Caco-2 (cell line): ENCODE measurements at regions of chr11 and their contacts with region 1.

Region 1: GRCh38 chr11:65418711-65419459 is 3.7 kb upstream of the NEAT1 start:
- DNase-seq: peak; percentile 96 to 98
- H3K4me3 ChIP-seq: peak overlapping the region; percentile 9
- H3K4me3 Mint-ChIP-seq: peak overlapping the region; percentile 73
- H3K27ac Mint-ChIP-seq: peak overlapping the region; percentile 95
- H3K4me1 ChIP-seq: peaks cover 55% of the 10 kb centered on the region
- H3K4me1 Mint-ChIP-seq: peaks cover 47% of the 10 kb centered on the region
- H3K27me3 ChIP-seq: no peaks in the 10 kb centered on the region
- H3K27me3 Mint-ChIP-seq: peaks cover 5% of the 10 kb centered on the region
- CTCF ChIP-seq: no peak

Region 2: GRCh38 chr11:65382033-65382807 is 36.7 kb before region 1 on chr11 and contains the start of gene SLC25A45:
- CTCF ChIA-PET with region 1: interaction called, 6 read pairs
- POLR2A ChIA-PET with region 1: interaction called, 7 read pairs
- intact Hi-C with region 1: loop called (anchors 1 kb)
- DNase-seq: peak; percentile 93 to 94
- H3K4me3 ChIP-seq: peak within 1 kb of the TSS; percentile 39
- H3K4me3 Mint-ChIP-seq: peak within 1 kb of the TSS; percentile 69
- H3K27ac Mint-ChIP-seq: peak within 1 kb of the TSS; percentile 90
- H3K4me1 ChIP-seq: peaks cover 56% of the 10 kb centered on the region
- H3K4me1 Mint-ChIP-seq: peaks cover 28% of the 10 kb centered on the region
- H3K27me3 ChIP-seq: no peaks in the 10 kb centered on the region
- H3K27me3 Mint-ChIP-seq: no peaks in the 10 kb centered on the region
- CTCF ChIP-seq: peak; percentile 76 to 94
- total RNA-seq, gene SLC25A45: 8.1 and 8.5 TPM in 2 replicates

Region 3: DNA sequence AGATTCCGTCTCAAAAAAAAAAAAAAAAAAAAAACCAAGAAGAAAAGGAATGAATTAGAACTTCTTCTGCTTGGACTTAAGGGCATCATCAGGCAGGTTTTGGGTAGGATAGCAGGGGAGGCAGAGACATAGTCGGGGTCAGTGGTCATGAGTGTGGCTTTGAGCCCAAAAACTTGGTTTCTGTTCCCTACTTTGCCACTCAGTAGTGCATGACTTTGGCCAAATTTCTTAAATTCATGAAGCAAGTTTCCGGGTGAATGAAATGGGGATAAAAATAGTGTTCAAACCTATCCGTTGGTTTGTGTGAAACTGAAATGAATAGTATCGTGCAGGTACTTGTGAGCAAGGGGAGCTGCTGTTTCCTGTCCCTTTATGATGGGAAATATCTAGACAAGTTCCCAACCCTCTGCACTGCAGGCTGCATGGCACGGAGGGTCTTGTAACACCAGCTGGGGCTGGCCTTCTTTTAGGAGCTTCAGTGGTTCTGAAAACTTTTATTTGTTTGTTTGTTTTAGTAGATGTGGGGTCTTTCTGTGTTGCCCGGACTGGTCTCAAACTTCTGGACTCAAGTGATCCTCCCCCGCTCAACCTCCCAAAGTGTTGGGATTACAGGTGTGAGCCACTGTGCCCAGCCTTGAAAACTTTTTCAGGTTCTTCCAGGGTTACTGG is 22.1 kb after region 1 on chr11:
- CTCF ChIA-PET with region 1: interaction called, 4 read pairs
- POLR2A ChIA-PET with region 1: interaction called, 5 read pairs
- intact Hi-C with region 1: loop called (anchors 1 kb)
- DNase-seq: no peak
- H3K4me3 ChIP-seq: no peak overlapping the region
- H3K4me3 Mint-ChIP-seq: peak overlapping the region; percentile 20
- H3K27ac Mint-ChIP-seq: peak overlapping the region; percentile 91
- H3K4me1 ChIP-seq: peaks cover 37% of the 10 kb centered on the region
- H3K4me1 Mint-ChIP-seq: peaks cover 47% of the 10 kb centered on the region
- H3K27me3 ChIP-seq: no peaks in the 10 kb centered on the region
- H3K27me3 Mint-ChIP-seq: no peaks in the 10 kb centered on the region
- CTCF ChIP-seq: no peak

Region 4: GRCh38 chr11:65477149-65477965 is 58.5 kb after region 1 on chr11:
- CTCF ChIA-PET with region 1: interaction called, 21 read pairs
- POLR2A ChIA-PET with region 1: interaction called, 22 read pairs
- intact Hi-C with region 1: no loop called
- DNase-seq: peak; percentile 96 to 98
- H3K4me3 ChIP-seq: peak overlapping the region; percentile 75
- H3K4me3 Mint-ChIP-seq: peak overlapping the region; percentile 90
- H3K27ac Mint-ChIP-seq: peak overlapping the region; percentile 95
- H3K4me1 ChIP-seq: peaks cover 46% of the 10 kb centered on the region
- H3K4me1 Mint-ChIP-seq: peaks cover 18% of the 10 kb centered on the region
- H3K27me3 ChIP-seq: no peaks in the 10 kb centered on the region
- H3K27me3 Mint-ChIP-seq: no peaks in the 10 kb centered on the region
- CTCF ChIP-seq: no peak

Region 5: DNA sequence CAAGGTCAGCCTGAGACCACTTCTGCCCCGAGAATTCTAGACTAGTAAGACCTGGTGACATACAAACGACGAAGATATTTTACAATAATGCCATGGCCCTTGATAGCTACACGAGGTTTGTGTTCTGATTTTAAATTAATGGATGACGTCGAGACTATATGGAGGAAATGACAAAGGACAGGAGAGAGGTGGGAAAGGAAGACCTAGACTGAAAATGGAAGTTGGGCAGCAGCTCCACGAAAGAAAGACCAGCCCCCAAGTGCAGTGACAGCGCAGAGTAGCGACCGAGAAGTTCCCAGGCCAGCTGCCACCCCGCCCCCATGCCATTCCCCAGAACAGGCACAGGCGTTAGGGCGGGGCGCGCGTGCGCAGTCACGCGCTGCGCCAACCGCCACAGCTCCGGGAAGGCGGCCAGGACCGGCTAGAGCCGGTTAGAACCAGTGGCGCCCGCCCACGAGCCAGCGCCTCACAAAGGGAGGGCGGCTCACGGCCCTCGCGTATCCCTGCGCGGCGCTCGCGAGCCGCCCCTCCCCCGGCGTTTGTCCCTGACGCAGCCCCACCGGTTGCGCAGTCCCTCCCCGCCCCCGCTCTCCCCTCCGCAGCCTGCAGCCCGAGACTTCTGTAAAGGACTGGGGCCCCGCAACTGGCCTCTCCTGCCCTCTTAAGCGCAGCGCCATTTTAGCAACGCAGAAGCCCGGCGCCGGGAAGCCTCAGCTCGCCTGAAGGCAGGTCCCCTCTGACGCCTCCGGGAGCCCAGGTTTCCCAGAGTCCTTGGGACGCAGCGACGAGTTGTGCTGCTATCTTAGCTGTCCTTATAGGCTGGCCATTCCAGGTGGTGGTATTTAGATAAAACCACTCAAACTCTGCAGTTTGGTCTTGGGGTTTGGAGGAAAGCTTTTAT is 78.5 kb after region 1 on chr11:
- CTCF ChIA-PET with region 1: interaction called, 8 read pairs
- POLR2A ChIA-PET with region 1: interaction called, 113 read pairs
- intact Hi-C with region 1: loop called (anchors 1 kb)
- DNase-seq: peak; percentile 99
- H3K4me3 ChIP-seq: peak overlapping the region; percentile 81
- H3K4me3 Mint-ChIP-seq: no peak overlapping the region
- H3K27ac Mint-ChIP-seq: no peak overlapping the region
- H3K4me1 ChIP-seq: peaks cover 37% of the 10 kb centered on the region
- H3K4me1 Mint-ChIP-seq: peaks cover 35% of the 10 kb centered on the region
- H3K27me3 ChIP-seq: no peaks in the 10 kb centered on the region
- H3K27me3 Mint-ChIP-seq: peaks cover 3% of the 10 kb centered on the region
- CTCF ChIP-seq: peak in 1 of 2 experiments; percentile 17

Region 6: GRCh38 chr11:65606876-65607613 is 188.2 kb after region 1 on chr11:
- CTCF ChIA-PET with region 1: no interaction called
- POLR2A ChIA-PET with region 1: interaction called, 5 read pairs
- intact Hi-C with region 1: loop called (anchors 1 kb)
- DNase-seq: peak; percentile 98 to 99
- H3K4me3 ChIP-seq: peak overlapping the region; percentile 47
- H3K4me3 Mint-ChIP-seq: peak overlapping the region; percentile 67
- H3K27ac Mint-ChIP-seq: peak overlapping the region; percentile 43
- H3K4me1 ChIP-seq: peaks cover 15% of the 10 kb centered on the region
- H3K4me1 Mint-ChIP-seq: peaks cover 16% of the 10 kb centered on the region
- H3K27me3 ChIP-seq: no peaks in the 10 kb centered on the region
- H3K27me3 Mint-ChIP-seq: no peaks in the 10 kb centered on the region
- CTCF ChIP-seq: no peak